PC-9 (cell line): ENCODE measurements at regions of chr6 and their contacts with region 1.

Region 1: DNA sequence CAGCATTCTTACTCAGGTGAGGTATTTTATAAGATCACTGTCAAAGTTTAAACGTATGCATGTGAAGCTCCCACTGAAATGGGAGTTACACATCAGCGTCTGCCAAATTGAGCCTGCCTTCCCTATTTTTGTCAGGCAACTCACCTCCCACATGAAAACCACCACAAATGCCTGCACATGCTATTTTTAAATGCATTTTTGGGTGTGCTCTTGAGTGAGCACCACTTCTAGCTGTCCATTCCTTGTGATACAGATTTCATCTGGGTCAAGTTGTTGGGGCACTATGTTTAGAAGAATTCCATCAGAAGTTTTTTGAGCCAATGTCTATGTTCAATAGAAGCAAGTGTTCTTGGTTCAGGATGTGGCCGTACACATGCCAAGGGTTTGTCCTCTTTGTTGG is 71.7 kb upstream of the RIPPLY2 start:
- DNase-seq: no peak
- H3K4me3 ChIP-seq: no peak overlapping the region
- H3K27ac ChIP-seq: no peak overlapping the region
- H3K4me1 ChIP-seq: no peaks in the 10 kb centered on the region
- H3K27me3 ChIP-seq: no peaks in the 10 kb centered on the region
- CTCF ChIP-seq: no peak

Region 2: DNA sequence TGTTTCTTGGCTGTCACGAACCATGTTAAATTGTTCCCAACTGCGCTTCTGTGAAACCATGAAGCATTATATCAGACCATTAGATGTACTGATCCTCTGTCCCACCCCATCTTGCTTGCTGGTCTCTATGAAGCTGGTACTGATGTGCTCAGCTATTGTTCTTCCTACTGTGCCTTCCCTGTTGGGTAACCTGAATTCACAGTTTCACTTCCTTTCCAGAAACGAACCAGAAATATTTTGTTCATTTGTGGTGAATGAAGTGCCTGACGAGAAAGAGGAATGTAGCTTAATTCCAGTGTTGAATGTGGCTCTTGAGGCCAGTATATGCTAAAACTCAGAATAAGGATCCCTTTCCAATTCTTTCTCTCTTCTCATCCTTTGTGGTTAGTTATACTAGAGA is 14.5 kb before region 1 on chr6:
- CTCF ChIA-PET with region 1: no interaction called
- POLR2A ChIA-PET with region 1: interaction called, 15 read pairs
- intact Hi-C with region 1: no loop called
- DNase-seq: no peak
- H3K4me3 ChIP-seq: no peak overlapping the region
- H3K27ac ChIP-seq: no peak overlapping the region
- H3K4me1 ChIP-seq: no peaks in the 10 kb centered on the region
- H3K27me3 ChIP-seq: no peaks in the 10 kb centered on the region
- CTCF ChIP-seq: no peak

Region 3: GRCh38 chr6:83815631-83816272 is 34.2 kb after region 1 on chr6:
- CTCF ChIA-PET with region 1: no interaction called
- POLR2A ChIA-PET with region 1: no interaction called
- intact Hi-C with region 1: no loop called
- DNase-seq: peak in 1 of 2 experiments; percentile 57
- H3K4me3 ChIP-seq: no peak overlapping the region
- H3K27ac ChIP-seq: no peak overlapping the region
- H3K4me1 ChIP-seq: peaks cover 8% of the 10 kb centered on the region; the same call in 1 of the 2 replicates
- H3K27me3 ChIP-seq: no peaks in the 10 kb centered on the region
- CTCF ChIP-seq: no peak